ENCODE measurements at regions of chr3 and their contacts with region 1.

Region 1: GRCh38 chr3:138923531-138923994 is 23.4 kb downstream of the FOXL2 start:
- DNase-seq: peak; percentile 88
- ATAC-seq: peak; percentile 47
- H3K4me3 ChIP-seq: 0 out of 2 replicates have a peak overlapping the region, but pooled peaks have one; percentile 30
- H3K27ac ChIP-seq: no peak overlapping the region
- H3K4me1 ChIP-seq: peaks cover 17% of the 10 kb centered on the region
- H3K27me3 ChIP-seq: no peaks in the 10 kb centered on the region
- CTCF ChIP-seq: peak; percentile 82

Region 2: DNA sequence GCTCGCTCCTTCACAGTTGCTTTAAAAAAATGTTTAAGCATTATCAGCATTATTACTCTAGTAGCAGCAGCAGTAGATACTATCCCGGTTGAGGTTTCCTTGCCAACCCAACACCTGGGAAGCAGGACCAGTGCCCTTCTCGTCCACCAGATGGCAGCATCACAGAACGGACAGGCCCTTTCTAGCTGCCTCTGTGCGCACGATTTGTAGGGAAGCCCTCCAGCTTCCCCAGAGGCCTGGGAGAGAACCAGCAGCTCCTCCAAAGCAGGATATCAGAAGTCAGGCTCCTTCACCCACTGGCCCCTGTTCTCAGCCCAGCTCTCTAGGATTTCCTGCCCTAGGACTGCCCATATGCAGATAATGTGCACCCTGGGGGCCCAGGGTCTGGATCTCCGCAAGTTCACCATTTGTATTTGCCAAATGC is 506.0 kb before region 1 on chr3:
- CTCF ChIA-PET with region 1: interaction called, 4 read pairs
- POLR2A ChIA-PET with region 1: no interaction called
- intact Hi-C with region 1: loop called (anchors 2 kb)
- DNase-seq: peak; percentile 80
- ATAC-seq: peak; percentile 96
- H3K4me3 ChIP-seq: no peak overlapping the region
- H3K27ac ChIP-seq: no peak overlapping the region
- H3K4me1 ChIP-seq: no peaks in the 10 kb centered on the region
- H3K27me3 ChIP-seq: no peaks in the 10 kb centered on the region
- CTCF ChIP-seq: peak; percentile 86

Region 3: GRCh38 chr3:138459619-138460535 is 463.7 kb before region 1 on chr3:
- CTCF ChIA-PET with region 1: no interaction called
- POLR2A ChIA-PET with region 1: no interaction called
- intact Hi-C with region 1: loop called (anchors 5 kb)
- DNase-seq: no peak
- ATAC-seq: no peak
- H3K4me3 ChIP-seq: no peak overlapping the region
- H3K27ac ChIP-seq: no peak overlapping the region
- H3K4me1 ChIP-seq: no peaks in the 10 kb centered on the region
- H3K27me3 ChIP-seq: no peaks in the 10 kb centered on the region
- CTCF ChIP-seq: no peak

Region 4: GRCh38 chr3:138493804-138494606 is 429.6 kb before region 1 on chr3:
- CTCF ChIA-PET with region 1: no interaction called
- POLR2A ChIA-PET with region 1: interaction called, 3 read pairs
- intact Hi-C with region 1: loop called (anchors 2 kb)
- DNase-seq: peak; percentile 75
- ATAC-seq: peak; percentile 92
- H3K4me3 ChIP-seq: no peak overlapping the region
- H3K27ac ChIP-seq: peak overlapping the region; percentile 82
- H3K4me1 ChIP-seq: peaks cover 27% of the 10 kb centered on the region
- H3K27me3 ChIP-seq: no peaks in the 10 kb centered on the region
- CTCF ChIP-seq: no peak

Region 5: GRCh38 chr3:138694287-138695007 is 229.1 kb before region 1 on chr3:
- CTCF ChIA-PET with region 1: interaction called, 3 read pairs
- POLR2A ChIA-PET with region 1: no interaction called
- intact Hi-C with region 1: loop called (anchors 2 kb)
- DNase-seq: peak; percentile 76
- ATAC-seq: peak; percentile 92
- H3K4me3 ChIP-seq: no peak overlapping the region
- H3K27ac ChIP-seq: peak overlapping the region; percentile 62
- H3K4me1 ChIP-seq: peaks cover 15% of the 10 kb centered on the region
- H3K27me3 ChIP-seq: no peaks in the 10 kb centered on the region
- CTCF ChIP-seq: no peak

Region 6: DNA sequence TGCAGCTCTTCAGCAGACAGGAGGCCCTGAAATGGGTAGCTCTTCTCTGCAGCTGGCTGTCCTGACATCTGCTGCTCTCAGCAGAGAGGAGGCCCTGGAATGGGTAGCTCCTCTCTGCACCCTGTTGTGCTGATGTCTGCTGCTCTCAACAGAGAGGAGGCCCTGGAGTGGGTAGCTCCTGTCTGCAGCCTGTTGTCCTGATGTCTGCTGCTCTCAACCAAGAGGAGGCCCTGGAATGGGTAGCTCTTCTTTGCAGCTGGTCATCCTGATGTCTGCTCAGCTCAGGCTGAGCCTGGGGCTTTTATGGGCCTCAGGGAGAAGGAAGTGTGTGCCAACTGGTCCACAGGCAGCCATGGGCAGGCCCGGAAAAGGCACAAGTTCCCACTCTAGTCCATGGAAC is 155.4 kb before region 1 on chr3:
- CTCF ChIA-PET with region 1: no interaction called
- POLR2A ChIA-PET with region 1: no interaction called
- intact Hi-C with region 1: loop called (anchors 2 kb)
- DNase-seq: no peak
- ATAC-seq: no peak
- H3K4me3 ChIP-seq: no peak overlapping the region
- H3K27ac ChIP-seq: no peak overlapping the region
- H3K4me1 ChIP-seq: peaks cover 26% of the 10 kb centered on the region
- H3K27me3 ChIP-seq: no peaks in the 10 kb centered on the region
- CTCF ChIP-seq: no peak

Region 7: GRCh38 chr3:139005356-139005993 is 81.9 kb after region 1 on chr3:
- CTCF ChIA-PET with region 1: no interaction called
- POLR2A ChIA-PET with region 1: no interaction called
- intact Hi-C with region 1: no loop called
- DNase-seq: no peak
- ATAC-seq: no peak
- H3K4me3 ChIP-seq: no peak overlapping the region
- H3K27ac ChIP-seq: no peak overlapping the region
- H3K4me1 ChIP-seq: no peaks in the 10 kb centered on the region
- H3K27me3 ChIP-seq: no peaks in the 10 kb centered on the region
- CTCF ChIP-seq: no peak